Heart left ventricle (tissue), 16 donors: ENCODE measurements at regions of chr16 and their contacts with region 1.

Region 1: DNA sequence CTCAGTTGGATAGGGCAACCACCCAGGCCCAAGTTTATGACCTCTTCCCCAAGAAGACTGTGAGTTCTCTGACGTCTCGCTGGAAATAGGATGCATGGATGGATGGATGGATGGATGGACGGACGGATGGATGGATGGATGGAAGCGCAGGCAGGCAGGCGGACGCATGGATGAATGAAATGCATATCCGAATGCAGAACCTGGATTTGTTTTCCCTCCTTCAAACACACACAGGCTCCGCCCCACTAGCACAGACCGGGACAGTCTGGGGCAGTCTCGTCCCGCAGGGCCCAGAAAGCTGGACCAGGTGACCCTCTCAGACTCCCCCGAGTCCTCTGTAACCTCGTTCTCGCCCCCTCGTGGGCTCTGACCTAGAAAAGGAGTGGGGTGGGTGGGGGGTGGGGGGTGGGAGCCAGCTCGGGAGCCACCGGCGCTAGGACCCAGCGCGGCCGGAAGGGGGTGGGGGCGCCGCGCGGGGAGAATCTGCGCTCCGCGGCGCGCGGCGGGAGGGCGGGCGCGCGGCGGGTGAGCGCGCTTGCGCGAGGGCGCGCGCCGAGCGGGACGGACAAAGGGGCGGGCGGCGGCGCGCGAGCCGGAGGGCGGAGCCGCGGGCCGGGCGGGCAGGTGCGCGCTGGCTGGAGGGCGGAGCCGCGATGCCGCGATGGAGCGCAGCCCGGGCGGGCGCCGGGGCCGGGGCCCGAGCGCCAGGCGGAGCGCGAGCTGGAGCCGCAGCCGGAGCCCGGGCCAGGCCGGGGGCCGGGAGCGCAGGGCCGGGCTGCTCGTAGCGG is at the start of gene SBK1:
- DNase-seq: peak; percentile 50 to 84 (median 73)
- ATAC-seq: peak; percentile 30 to 95 (median 80)
- H3K4me3 ChIP-seq: peak within 1 kb of the TSS; percentile 34 to 69 (median 56)
- H3K27ac ChIP-seq: peak within 1 kb of the TSS in 5 of 12 donors; percentile 30 to 64 (median 45)
- H3K4me1 ChIP-seq: peaks cover 0 to 19% (median 9%) of the 10 kb centered on the region in 12 donors
- H3K27me3 ChIP-seq: peaks cover 0 to 14% (median 3%) of the 10 kb centered on the region in 9 donors
- CTCF ChIP-seq: no peak
- POLR2A ChIP-seq: no peak
- total RNA-seq, gene SBK1: 0.94 to 6.1 (median 2.4) TPM

Region 2: GRCh38 chr16:28220726-28221125 is 71.3 kb before region 1 on chr16:
- intact Hi-C with region 1: no loop called
- DNase-seq: no peak
- ATAC-seq: no peak
- H3K4me3 ChIP-seq: no peak overlapping the region
- H3K27ac ChIP-seq: no peak overlapping the region
- H3K4me1 ChIP-seq: no peaks in the 10 kb centered on the region
- H3K27me3 ChIP-seq: peaks cover 0 to 3% (median 0%) of the 10 kb centered on the region in 9 donors
- CTCF ChIP-seq: no peak
- POLR2A ChIP-seq: no peak

Region 3: GRCh38 chr16:28326944-28327610 is 35.0 kb after region 1 on chr16:
- intact Hi-C with region 1: loop called in 1 of 10 experiments (anchors 5 kb)
- DNase-seq: peak in 2 of 5 donors; percentile 48 to 83
- ATAC-seq: peak in 3 of 4 donors; percentile 63 to 73 (median 67)
- H3K4me3 ChIP-seq: no peak overlapping the region
- H3K27ac ChIP-seq: no peak overlapping the region
- H3K4me1 ChIP-seq: no peaks in the 10 kb centered on the region
- H3K27me3 ChIP-seq: no peaks in the 10 kb centered on the region
- CTCF ChIP-seq: peak; percentile 51 to 77 (median 64)
- POLR2A ChIP-seq: no peak